Gastrocnemius medialis (tissue), 4 donors: ENCODE measurements at regions of chr3 and their contacts with region 1.

Region 1: GRCh38 chr3:197959898-197960693 is at the start of gene LMLN:
- DNase-seq: peak; percentile 94
- ATAC-seq: peak; percentile 97
- H3K4me3 ChIP-seq: peak within 1 kb of the TSS; percentile 75 to 89 (median 80)
- H3K27ac ChIP-seq: peak within 1 kb of the TSS; percentile 74 to 86 (median 80)
- H3K4me1 ChIP-seq: peaks cover 15 to 19% of the 10 kb centered on the region in 2 donors
- H3K27me3 ChIP-seq: no peaks in the 10 kb centered on the region
- CTCF ChIP-seq: peak in 1 of 5 experiments; percentile 27
- POLR2A ChIP-seq: peak; percentile 57 to 76
- total RNA-seq, gene LMLN: 2.7 to 8.8 (median 4.6) TPM

Region 2: DNA sequence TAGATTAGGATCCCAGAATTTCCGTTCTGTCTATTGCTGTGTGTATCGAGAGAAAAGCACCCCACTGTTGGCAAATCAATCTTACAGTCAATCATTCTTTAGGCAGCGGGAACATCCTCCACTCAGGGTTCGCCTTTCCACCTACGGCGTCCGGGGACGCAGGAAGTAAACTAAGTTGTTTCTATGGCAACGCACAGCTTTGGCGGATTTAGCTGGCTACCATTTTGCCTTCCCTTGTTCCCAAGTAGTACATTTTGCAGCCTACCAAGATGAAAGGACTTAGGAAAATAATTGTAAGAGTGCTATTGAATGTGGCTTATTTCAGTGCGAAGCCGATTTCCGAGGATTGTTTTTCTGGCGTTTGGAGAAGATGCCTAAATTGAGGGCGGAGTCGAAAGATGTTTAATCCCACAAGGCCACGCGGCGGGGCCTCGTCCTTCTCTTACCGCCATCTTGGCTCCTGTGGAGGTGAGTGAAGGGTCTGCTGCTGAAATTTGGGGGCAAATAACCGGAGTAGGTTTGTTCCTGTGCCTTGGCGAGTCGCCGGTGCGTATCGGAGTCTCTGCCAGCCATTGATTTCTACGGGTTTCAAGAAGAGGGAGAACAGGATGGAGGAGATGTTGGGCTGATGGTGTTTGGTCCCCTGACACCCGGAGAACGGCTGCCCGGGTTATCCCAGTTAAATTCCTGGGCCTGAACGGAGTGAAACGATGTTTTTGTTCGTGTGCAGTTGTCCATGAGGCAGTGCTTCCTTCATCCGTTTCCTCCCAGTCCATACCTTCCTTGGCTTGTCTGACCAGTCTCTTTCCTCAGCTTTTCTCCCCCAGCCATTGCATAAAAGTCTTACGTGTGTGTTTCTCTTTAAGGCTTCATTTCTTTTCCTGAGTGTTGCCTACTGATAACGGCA is 10.1 kb before region 1 on chr3 and contains the start of gene RPL35A:
- in situ Hi-C with region 1: no loop called
- intact Hi-C with region 1: loop called (anchors 1 kb)
- DNase-seq: peak; percentile 68 to 81
- ATAC-seq: peak; percentile 95 to 96
- H3K4me3 ChIP-seq: peak within 1 kb of the TSS; percentile 53 to 75 (median 72)
- H3K27ac ChIP-seq: peak within 1 kb of the TSS; percentile 83 to 89 (median 87)
- H3K4me1 ChIP-seq: peaks cover 23 to 27% of the 10 kb centered on the region in 2 donors
- H3K27me3 ChIP-seq: no peaks in the 10 kb centered on the region
- CTCF ChIP-seq: peak in 1 of 5 experiments; percentile 7
- POLR2A ChIP-seq: peak; percentile 80 to 87
- total RNA-seq, gene RPL35A: 409 to 491 (median 427) TPM